K562 (cell line): ENCODE measurements at regions of chr20 and their contacts with region 1.

Region 1: DNA sequence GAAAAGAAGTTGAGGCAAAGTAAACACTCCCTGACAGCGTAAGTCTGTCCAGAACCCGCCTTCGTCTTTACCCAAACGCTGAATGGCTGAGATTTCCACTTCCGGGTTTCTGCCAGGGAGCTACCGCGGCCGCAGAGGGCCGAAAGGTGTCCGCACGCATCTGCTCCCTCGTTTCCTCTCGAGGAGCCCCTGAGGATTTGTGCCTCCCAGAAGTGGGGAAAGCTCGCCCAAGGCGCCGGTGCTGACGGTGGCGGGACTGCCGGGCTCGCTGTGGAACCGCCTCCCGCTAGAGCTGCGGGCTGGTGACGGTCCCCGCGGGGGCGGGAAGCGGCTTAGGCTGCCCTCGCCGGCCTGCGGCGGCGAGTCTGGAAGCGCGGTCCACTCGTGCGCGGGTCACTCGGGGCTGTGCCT is 1760.2 kb upstream of the DEFB115 start:
- DNase-seq: peak; percentile 36 to 95 (median 70)
- ATAC-seq: peak; percentile 100
- H3K4me3 ChIP-seq: peak overlapping the region; percentile 44
- H3K27ac ChIP-seq: peak overlapping the region; percentile 68; the same call in 2 of the 3 replicates
- H3K4me1 ChIP-seq: peaks cover 0 to 5% of the 10 kb centered on the region in 2 experiments; a peak in 2 of 5 replicates
- H3K27me3 ChIP-seq: no peaks in the 10 kb centered on the region
- CTCF ChIP-seq: peak in 2 of 3 experiments; percentile 31 to 33; a peak in 3 of 6 replicates
- EP300 ChIP-seq: no peak
- POLR2A ChIP-seq: 0 out of 2 replicates have a peak, but pooled peaks have one; percentile 49
- RAD21 ChIP-seq: no peak

Region 2: GRCh38 chr20:29079769-29080690 is 417.2 kb before region 1 on chr20:
- CTCF ChIA-PET with region 1: no interaction called
- POLR2A ChIA-PET with region 1: no interaction called
- in situ Hi-C with region 1: loop called (anchors 5 kb)
- intact Hi-C with region 1: no loop called
- DNase-seq: peak; percentile 58 to 97 (median 71)
- ATAC-seq: peak; percentile 99
- H3K4me3 ChIP-seq: peak overlapping the region; percentile 53
- H3K27ac ChIP-seq: peak overlapping the region; percentile 66
- H3K4me1 ChIP-seq: peaks cover 0 to 6% of the 10 kb centered on the region in 2 experiments; a peak in 2 of 5 replicates
- H3K27me3 ChIP-seq: no peaks in the 10 kb centered on the region
- CTCF ChIP-seq: peak; percentile 62 to 79 (median 76)
- EP300 ChIP-seq: peak; percentile 37; the same call in 1 of the 2 replicates
- POLR2A ChIP-seq: peak; percentile 61
- RAD21 ChIP-seq: peak in 1 of 2 experiments; percentile 25; a peak in 2 of 4 replicates

Region 3: GRCh38 chr20:29452186-29452585 is 45.1 kb before region 1 on chr20:
- CTCF ChIA-PET with region 1: no interaction called
- POLR2A ChIA-PET with region 1: no interaction called
- in situ Hi-C with region 1: no loop called
- intact Hi-C with region 1: no loop called
- DNase-seq: no peak
- ATAC-seq: no peak
- H3K4me3 ChIP-seq: no peak overlapping the region
- H3K27ac ChIP-seq: no peak overlapping the region
- H3K4me1 ChIP-seq: no peaks in the 10 kb centered on the region; a peak in 1 of 5 replicates
- H3K27me3 ChIP-seq: no peaks in the 10 kb centered on the region; a peak in 1 of 5 replicates
- CTCF ChIP-seq: no peak
- EP300 ChIP-seq: no peak
- POLR2A ChIP-seq: no peak
- RAD21 ChIP-seq: no peak